ENCODE measurements at regions of chr18 and their contacts with region 1.

Region 1: DNA sequence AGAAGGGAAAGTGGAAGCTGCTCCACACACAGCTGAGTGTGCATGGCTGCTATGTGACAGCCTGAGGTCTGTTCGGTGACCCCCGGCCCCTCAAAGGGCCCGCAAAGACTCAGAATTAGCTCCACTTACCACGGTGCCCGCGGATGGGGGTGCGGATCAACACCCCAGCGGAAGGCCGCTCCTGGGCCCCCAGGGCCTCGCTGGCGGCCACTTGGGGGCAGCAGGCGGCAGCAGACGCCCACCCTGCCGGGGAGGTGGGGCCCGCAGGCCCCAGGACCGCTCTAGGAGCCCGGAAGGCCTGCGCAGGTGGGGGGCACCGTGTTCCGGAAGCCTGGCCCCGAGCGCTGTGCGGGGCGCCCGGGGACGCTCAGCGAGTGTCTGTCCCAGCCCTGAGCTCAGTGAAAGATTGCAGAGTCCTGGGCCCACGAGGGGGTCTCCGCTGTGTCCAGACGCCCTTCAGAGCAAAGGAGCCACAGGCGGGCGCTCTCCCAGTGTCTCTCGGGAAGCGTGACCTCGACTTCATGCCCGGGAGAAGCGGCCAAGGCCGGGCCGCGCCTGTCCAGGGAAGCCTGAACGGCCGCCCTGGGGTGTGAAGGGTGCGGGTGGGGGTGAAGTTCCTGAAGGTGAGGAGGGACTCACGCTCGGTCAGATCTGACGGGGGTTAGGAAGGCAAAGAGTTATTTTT is 118.7 kb downstream of the VAPA start:
- DNase-seq: peak; percentile 52
- H3K4me3 ChIP-seq: peak overlapping the region; percentile 24 to 50
- H3K27ac ChIP-seq: peak overlapping the region in 1 of 2 donors; percentile 46
- H3K4me1 ChIP-seq: peaks cover 24% of the 10 kb centered on the region
- H3K27me3 ChIP-seq: no peaks in the 10 kb centered on the region
- CTCF ChIP-seq: no peak
- POLR2A ChIP-seq: no peak

Region 2: GRCh38 chr18:9771261-9771976 is 261.1 kb before region 1 on chr18:
- intact Hi-C with region 1: no loop called
- DNase-seq: peak; percentile 89
- H3K4me3 ChIP-seq: no peak overlapping the region
- H3K27ac ChIP-seq: peak overlapping the region; percentile 5 to 36
- H3K4me1 ChIP-seq: peaks cover 21% of the 10 kb centered on the region
- H3K27me3 ChIP-seq: no peaks in the 10 kb centered on the region
- CTCF ChIP-seq: peak; percentile 94 to 97 (median 96)
- POLR2A ChIP-seq: no peak

Region 3: DNA sequence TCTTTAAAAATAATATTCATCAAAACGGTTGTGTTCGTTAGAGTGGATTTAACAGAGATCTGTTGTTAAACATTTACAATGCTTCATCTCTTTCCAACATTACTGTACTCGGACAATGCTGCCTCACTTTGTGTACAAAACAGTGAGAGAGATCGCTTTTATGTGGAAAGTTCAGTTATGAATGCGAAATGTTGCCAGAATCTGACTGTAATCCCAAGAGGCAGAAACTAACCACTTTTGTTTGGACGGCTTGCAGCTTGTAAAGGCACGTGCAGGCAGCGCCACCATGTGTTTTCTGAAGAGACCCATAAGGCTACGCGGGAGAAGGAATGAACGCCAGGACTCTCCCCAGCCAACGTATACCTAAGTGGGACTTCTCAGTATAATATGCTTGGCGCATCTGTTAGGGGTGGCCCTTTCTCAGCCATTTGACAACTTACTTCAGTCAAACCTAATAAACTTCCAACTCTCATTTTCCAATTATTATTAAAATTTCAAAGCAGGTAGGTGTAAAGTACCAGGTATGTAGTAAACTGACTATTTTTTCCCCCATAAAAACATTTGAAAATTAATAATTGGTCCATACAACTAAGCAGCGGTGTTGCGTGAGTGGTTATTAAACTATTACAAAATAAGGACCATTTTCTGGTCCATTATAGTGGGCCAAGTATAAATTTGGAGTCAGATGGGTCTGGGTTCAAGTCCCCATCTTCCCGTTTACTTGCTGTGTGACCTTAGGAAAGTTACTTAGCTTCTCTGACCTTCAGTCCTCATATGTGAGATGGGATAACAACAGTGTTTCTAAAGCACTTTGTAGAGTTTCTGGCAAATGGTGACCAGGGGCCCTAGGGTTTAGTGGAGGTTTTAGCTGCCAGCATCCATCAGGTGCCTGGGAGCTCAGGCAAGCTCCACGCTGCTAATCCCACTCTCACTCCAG is 487.8 kb after region 1 on chr18:
- intact Hi-C with region 1: loop called (anchors 10 kb)
- DNase-seq: peak; percentile 93
- H3K4me3 ChIP-seq: no peak overlapping the region
- H3K27ac ChIP-seq: no peak overlapping the region
- H3K4me1 ChIP-seq: no peaks in the 10 kb centered on the region
- H3K27me3 ChIP-seq: no peaks in the 10 kb centered on the region
- CTCF ChIP-seq: peak; percentile 66 to 78 (median 73)
- POLR2A ChIP-seq: no peak

Measured in testis (tissue), 5 donors.